ENCODE measurements at regions of chr12 and their contacts with region 1.

Region 1: GRCh38 chr12:122793685-122794106 is 19.3 kb downstream of the CCDC62 start:
- DNase-seq: peak; percentile 75
- H3K4me3 ChIP-seq: no peak overlapping the region
- H3K27ac ChIP-seq: no peak overlapping the region
- H3K4me1 ChIP-seq: no peaks in the 10 kb centered on the region
- H3K27me3 ChIP-seq: no peaks in the 10 kb centered on the region
- CTCF ChIP-seq: peak; percentile 41 to 57
- POLR2A ChIP-seq: no peak

Region 2: GRCh38 chr12:122813310-122813713 is 19.6 kb after region 1 on chr12:
- CTCF ChIA-PET with region 1: interaction called, 18 read pairs
- POLR2A ChIA-PET with region 1: no interaction called
- dilution Hi-C with region 1: no loop called
- intact Hi-C with region 1: no loop called
- DNase-seq: no peak
- H3K4me3 ChIP-seq: no peak overlapping the region
- H3K27ac ChIP-seq: no peak overlapping the region
- H3K4me1 ChIP-seq: no peaks in the 10 kb centered on the region
- H3K27me3 ChIP-seq: no peaks in the 10 kb centered on the region
- CTCF ChIP-seq: no peak
- POLR2A ChIP-seq: no peak

Region 3: DNA sequence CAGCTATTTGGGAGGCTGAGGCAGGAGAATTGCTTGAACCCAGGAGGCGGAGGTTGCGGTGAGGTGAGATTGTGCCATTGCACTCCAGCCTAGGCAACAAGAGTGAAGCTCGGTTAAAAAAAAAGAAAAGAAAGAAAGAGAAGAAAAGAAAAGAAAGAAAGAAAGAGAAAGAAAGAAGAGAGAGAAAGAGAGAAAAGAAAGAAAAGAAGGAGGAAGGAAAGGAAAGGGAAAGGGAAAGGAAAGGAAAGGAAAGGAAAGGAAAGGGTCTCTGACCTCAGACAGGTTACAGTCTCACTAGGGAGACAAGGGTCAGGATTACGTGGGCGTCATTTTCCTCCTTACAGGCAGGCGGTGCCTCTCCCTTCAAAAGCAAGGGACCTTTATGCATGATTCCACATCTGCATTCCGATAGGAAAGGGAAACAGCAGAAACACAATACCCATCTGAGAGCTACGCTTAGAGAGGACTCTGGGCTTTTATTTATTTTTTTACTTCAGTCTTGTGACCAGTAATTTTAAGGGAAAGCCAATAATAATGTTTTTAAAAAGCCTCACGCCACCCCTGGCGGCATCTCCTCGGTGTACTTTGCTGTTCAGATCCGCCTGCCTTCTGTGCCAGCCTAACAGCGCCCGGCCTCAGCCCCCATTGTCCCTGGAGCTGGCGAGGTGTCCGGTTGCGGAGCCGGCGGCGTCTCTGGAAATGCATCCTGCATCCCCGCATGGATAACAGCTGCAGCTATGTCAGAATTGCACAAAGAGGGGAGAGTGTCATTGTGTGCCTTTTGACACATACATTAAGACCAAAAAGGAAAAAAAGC is 40.6 kb after region 1 on chr12:
- CTCF ChIA-PET with region 1: interaction called, 58 read pairs
- POLR2A ChIA-PET with region 1: no interaction called
- dilution Hi-C with region 1: no loop called
- intact Hi-C with region 1: loop called (anchors 5 kb)
- DNase-seq: peak; percentile 83
- H3K4me3 ChIP-seq: peak overlapping the region; percentile 1 to 91 (median 53)
- H3K27ac ChIP-seq: peak overlapping the region; percentile 19
- H3K4me1 ChIP-seq: peaks cover 17% of the 10 kb centered on the region
- H3K27me3 ChIP-seq: no peaks in the 10 kb centered on the region
- CTCF ChIP-seq: no peak
- POLR2A ChIP-seq: no peak

Region 4: GRCh38 chr12:122851820-122852219 is 58.1 kb after region 1 on chr12:
- CTCF ChIA-PET with region 1: interaction called, 11 read pairs
- POLR2A ChIA-PET with region 1: no interaction called
- dilution Hi-C with region 1: no loop called
- intact Hi-C with region 1: loop called (anchors 5 kb)
- DNase-seq: peak; percentile 97
- H3K4me3 ChIP-seq: no peak overlapping the region
- H3K27ac ChIP-seq: peak overlapping the region; percentile 82
- H3K4me1 ChIP-seq: peaks cover 27% of the 10 kb centered on the region
- H3K27me3 ChIP-seq: no peaks in the 10 kb centered on the region
- CTCF ChIP-seq: no peak
- POLR2A ChIP-seq: peak; percentile 44

Region 5: DNA sequence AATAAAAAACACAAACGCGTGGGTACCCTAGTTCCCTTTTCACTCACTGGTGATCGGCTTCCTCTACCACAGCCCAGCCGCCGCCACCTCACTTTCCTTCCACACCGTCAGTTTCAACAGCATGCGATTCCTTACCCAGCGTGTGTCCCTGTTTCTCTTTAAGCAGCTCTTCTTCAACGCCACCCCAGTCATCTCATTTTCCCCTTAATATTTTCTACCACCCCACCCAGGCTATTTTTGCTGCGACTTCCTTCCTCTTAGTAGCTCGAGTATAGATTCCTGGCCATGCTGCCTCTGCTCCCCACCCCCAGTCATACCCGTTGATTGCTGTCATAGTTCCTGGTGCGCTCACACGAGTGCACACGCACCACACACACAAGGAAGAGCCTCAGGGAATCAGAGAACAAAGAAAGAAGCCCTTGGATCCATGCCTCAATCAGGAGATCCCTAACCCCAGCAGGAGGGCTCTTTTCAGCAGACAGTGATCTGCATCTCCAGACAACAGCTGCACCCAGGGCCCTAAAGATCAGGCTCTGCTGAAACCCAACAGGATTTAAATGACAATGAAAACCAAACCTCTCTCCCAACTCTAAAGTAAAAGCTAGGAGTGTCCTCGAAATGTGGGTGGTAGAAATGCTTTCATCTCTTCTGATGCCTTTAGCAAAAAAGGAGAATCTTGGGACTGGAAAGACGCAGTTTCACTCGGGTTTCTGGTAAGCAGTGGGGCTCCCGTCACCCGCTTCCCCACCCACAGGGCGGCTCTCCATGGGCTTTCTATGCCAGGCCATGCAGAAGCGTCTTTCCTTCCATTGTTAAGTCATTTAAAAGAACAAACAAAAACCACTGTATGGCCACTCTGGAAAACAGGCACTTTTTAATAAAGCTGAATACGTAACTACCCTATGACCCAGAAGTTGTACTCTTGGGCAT is 78.4 kb after region 1 on chr12:
- CTCF ChIA-PET with region 1: interaction called, 10 read pairs
- POLR2A ChIA-PET with region 1: no interaction called
- dilution Hi-C with region 1: no loop called
- intact Hi-C with region 1: no loop called
- DNase-seq: peak; percentile 84
- H3K4me3 ChIP-seq: peak overlapping the region in 2 of 3 experiments; percentile 25 to 60
- H3K27ac ChIP-seq: peak overlapping the region; percentile 92
- H3K4me1 ChIP-seq: peaks cover 32% of the 10 kb centered on the region
- H3K27me3 ChIP-seq: no peaks in the 10 kb centered on the region
- CTCF ChIP-seq: no peak
- POLR2A ChIP-seq: no peak

Region 6: GRCh38 chr12:122951979-122952892 is 158.5 kb after region 1 on chr12:
- CTCF ChIA-PET with region 1: interaction called, 32 read pairs
- POLR2A ChIA-PET with region 1: no interaction called
- dilution Hi-C with region 1: no loop called
- intact Hi-C with region 1: loop called (anchors 1 kb)
- DNase-seq: peak; percentile 72
- H3K4me3 ChIP-seq: no peak overlapping the region
- H3K27ac ChIP-seq: peak overlapping the region; percentile 51
- H3K4me1 ChIP-seq: peaks cover 18% of the 10 kb centered on the region
- H3K27me3 ChIP-seq: no peaks in the 10 kb centered on the region
- CTCF ChIP-seq: peak; percentile 91 to 92
- POLR2A ChIP-seq: no peak

Measured in endothelial cell of umbilical vein (primary cell).